HepG2 (cell line): ENCODE measurements at regions of chr3 and their contacts with region 1.

Region 1: GRCh38 chr3:69791919-69792399 is 52.7 kb downstream of the MITF start:
- DNase-seq: no peak
- ATAC-seq: no peak
- H3K4me3 ChIP-seq: no peak overlapping the region
- H3K27ac ChIP-seq: no peak overlapping the region
- H3K4me1 ChIP-seq: no peaks in the 10 kb centered on the region
- H3K27me3 ChIP-seq: no peaks in the 10 kb centered on the region
- CTCF ChIP-seq: no peak
- EP300 ChIP-seq: no peak
- POLR2A ChIP-seq: no peak
- RAD21 ChIP-seq: no peak

Region 2: DNA sequence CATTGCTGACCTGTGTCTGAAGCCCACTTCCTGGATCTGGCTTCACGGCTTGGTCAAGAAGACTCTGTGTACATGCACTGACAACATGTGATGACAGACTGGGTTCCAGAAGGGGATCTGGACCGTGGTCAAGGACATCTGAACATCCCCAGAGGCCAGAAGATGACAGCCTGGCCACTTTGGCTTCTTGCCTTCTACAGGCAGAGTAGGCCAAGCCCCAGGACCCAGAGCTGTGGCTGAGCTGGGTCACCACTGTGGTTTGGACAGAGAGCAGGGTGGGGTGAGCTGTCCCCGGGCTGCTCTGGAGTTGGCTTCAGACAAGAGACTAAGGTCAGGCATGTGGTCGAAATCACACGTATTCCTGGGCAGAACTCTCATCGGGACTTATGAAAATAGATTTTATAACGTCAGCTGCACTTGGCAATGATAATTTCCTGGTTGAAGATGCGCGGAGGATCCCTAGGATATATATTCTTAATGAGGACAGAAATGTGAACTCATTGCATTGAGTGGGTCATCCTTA is 292.0 kb before region 1 on chr3:
- CTCF ChIA-PET with region 1: no interaction called
- POLR2A ChIA-PET with region 1: no interaction called
- in situ Hi-C with region 1: no loop called
- intact Hi-C with region 1: loop called (anchors 10 kb)
- DNase-seq: no peak
- ATAC-seq: no peak
- H3K4me3 ChIP-seq: no peak overlapping the region
- H3K27ac ChIP-seq: no peak overlapping the region
- H3K4me1 ChIP-seq: no peaks in the 10 kb centered on the region
- H3K27me3 ChIP-seq: no peaks in the 10 kb centered on the region
- CTCF ChIP-seq: no peak
- EP300 ChIP-seq: no peak
- POLR2A ChIP-seq: no peak
- RAD21 ChIP-seq: no peak